AG04449 (cell line): ENCODE measurements at regions of chr1 and their contacts with region 1.

Region 1: DNA sequence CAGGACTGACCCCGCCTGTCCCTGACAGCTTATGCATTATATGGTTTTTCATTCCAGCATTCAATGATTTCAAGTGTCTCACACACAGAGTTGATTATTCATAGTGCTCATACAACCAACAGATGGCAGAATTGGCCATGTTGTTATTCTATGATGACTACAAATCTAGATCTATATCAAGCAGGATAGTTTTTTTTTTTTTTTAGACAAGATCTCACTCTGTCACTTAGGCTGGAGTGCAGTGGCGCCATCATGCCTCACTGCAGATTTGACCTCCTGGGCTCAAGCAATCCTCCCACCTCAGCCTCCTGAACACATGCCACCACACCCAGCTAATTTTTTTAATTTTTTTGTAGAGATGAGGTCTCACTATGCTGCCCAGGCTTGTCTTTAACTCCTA is 40.1 kb upstream of the LRRC8D start:
- DNase-seq: peak; percentile 10
- H3K4me3 ChIP-seq: no peak overlapping the region
- CTCF ChIP-seq: peak; percentile 42

Region 2: GRCh38 chr1:89794406-89794805 is 13.7 kb after region 1 on chr1:
- CTCF ChIA-PET with region 1: interaction called, 37 read pairs
- POLR2A ChIA-PET with region 1: no interaction called
- DNase-seq: no peak
- H3K4me3 ChIP-seq: no peak overlapping the region
- CTCF ChIP-seq: no peak

Region 3: DNA sequence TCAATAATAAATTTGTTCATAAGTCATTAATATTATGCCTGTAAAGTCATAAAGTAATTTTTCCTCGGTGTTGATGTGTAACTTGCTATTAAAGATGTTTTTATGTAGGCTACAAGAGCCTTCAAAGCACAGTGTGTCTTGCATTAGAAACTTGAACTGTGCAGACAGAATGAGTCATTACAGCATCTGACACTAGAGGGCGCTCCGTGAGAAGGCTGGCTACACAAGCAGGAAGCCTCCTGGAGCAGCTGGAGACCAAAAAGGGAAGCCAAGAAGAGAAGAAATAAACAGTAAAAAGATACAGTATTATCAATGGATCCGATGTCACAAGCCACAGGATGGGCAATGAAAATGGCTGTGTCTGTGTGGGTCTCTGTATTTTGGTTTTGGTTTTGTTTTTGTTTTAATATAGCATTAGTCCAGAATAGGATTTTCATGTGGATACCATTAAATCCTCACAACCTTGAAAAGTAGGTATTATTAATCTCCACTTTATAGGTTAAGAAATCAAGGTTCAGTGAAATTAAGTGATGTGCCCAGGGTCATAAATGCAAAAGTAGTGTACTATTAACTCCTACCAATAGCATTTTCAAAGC is 24.0 kb after region 1 on chr1:
- CTCF ChIA-PET with region 1: interaction called, 10 read pairs
- POLR2A ChIA-PET with region 1: no interaction called
- DNase-seq: no peak
- H3K4me3 ChIP-seq: no peak overlapping the region
- CTCF ChIP-seq: peak; percentile 86